ENCODE measurements at regions of chr11 and their contacts with region 1.

Region 1: GRCh38 chr11:68271781-68272608 is at the start of gene C11orf24:
- DNase-seq: peak; percentile 97
- ATAC-seq: peak; percentile 97
- H3K4me3 Mint-ChIP-seq: peak within 1 kb of the TSS; percentile 91
- H3K27ac Mint-ChIP-seq: peak within 1 kb of the TSS; percentile 95
- H3K4me1 Mint-ChIP-seq: peaks cover 30% of the 10 kb centered on the region
- H3K27me3 Mint-ChIP-seq: no peaks in the 10 kb centered on the region
- total RNA-seq, gene C11orf24: 29.4 to 37.4 TPM

Region 2: GRCh38 chr11:68030318-68031138 is 241.5 kb before region 1 on chr11 and contains the start of gene NDUFS8:
- CTCF ChIA-PET with region 1: no interaction called
- POLR2A ChIA-PET with region 1: no interaction called
- intact Hi-C with region 1: loop called in 1 of 2 experiments (anchors 1 kb)
- DNase-seq: peak; percentile 97
- ATAC-seq: peak; percentile 99
- H3K4me3 Mint-ChIP-seq: peak within 1 kb of the TSS; percentile 96
- H3K27ac Mint-ChIP-seq: peak within 1 kb of the TSS; percentile 95
- H3K4me1 Mint-ChIP-seq: peaks cover 26% of the 10 kb centered on the region
- H3K27me3 Mint-ChIP-seq: no peaks in the 10 kb centered on the region
- total RNA-seq, gene NDUFS8: 108 to 113 TPM

Region 3: DNA sequence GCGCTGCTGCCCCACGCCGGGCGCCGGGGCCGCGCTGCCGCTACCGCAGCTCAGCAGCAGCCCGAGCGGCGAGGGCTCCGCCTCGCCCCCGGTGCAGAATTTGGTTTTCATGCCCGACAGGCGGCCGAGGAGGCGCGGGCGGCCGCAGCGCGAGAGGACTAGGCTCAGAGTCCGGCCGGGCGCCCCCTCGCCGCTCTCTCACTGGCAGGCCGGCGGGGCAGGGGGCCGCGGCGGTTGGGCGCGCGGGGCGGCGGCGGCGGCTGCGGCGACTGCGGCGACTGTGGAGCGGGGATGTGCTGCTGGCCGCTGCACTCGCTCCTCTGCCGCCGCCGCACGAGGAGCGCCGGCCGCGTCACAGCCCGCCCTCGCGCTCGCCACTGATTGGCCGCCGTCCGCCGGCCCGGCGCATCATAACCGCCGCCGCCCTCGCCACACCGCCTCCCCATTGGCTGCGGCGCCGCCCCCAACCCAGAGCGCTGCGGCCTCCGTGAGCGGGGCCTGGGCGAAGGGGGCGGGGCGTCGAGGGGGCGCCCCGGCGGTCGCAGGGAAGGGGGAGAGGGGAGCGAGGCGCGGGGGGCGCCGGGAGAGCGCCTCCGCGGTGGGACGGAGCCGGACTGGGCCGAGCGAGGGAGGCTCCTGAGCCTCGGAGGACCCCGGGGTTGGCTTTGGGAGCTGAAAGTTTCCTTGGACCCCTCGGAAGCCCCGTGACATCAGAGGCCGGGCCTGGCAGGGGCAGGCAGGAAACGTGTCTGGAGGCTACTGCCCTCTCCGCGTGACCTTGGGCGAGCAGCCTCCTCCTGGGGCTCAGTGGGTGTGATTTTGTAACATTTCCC is 150.7 kb before region 1 on chr11 and contains the start of gene CHKA:
- CTCF ChIA-PET with region 1: no interaction called
- POLR2A ChIA-PET with region 1: no interaction called
- intact Hi-C with region 1: loop called in 1 of 2 experiments (anchors 1 kb)
- DNase-seq: peak; percentile 94
- ATAC-seq: peak; percentile 97
- H3K4me3 Mint-ChIP-seq: peak within 1 kb of the TSS; percentile 71
- H3K27ac Mint-ChIP-seq: peak within 1 kb of the TSS; percentile 68
- H3K4me1 Mint-ChIP-seq: peaks cover 7% of the 10 kb centered on the region
- H3K27me3 Mint-ChIP-seq: no peaks in the 10 kb centered on the region
- total RNA-seq, gene CHKA: 5.5 to 7.5 TPM

Region 4: DNA sequence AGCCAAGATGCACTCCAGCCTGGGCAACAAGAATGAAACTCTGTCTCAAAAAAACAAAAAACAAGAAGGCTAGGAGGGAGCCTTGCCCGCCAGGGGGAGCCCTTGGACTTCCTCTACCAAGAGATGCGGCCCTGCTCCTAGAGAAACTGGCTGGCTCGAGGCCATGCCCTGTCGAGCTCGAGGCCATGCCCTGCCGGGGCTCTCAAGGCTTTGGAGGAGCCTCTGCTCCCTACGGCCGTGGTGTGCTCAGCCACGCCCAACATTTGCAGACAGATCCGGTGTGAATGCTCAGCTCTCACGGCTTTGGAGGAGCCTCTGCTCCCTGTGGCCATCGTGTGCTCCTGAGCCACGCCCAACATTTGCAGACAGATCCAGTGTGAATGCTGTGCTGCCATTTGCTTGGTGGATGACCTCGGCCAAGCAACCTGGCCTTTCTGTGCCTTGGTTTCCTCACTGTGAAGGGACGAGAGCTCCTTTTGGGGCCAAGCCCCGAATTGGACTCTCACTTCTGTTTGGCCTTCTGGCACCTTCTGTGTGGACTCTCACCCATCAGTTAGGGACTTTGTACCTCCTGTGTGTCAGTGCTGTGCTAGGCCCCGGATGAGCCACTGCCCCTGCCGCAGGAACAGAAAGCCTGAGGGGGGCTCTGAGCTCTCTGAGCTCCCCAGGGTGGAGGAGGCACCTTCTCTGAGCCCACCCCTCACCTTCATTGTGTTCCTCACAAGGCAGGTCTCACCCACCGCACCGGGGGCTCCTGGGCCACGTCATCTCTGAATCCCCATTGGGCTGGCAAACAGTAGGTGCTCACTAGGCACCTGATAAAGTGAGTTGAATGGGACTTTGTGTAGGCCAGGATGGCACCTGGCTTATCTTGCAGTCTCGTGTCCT is 14.3 kb before region 1 on chr11:
- CTCF ChIA-PET with region 1: interaction called, 26 read pairs
- POLR2A ChIA-PET with region 1: no interaction called
- intact Hi-C with region 1: loop called in 1 of 2 experiments (anchors 1 kb)
- DNase-seq: peak; percentile 97
- ATAC-seq: peak; percentile 97
- H3K4me3 Mint-ChIP-seq: no peak overlapping the region
- H3K27ac Mint-ChIP-seq: no peak overlapping the region
- H3K4me1 Mint-ChIP-seq: peaks cover 3% of the 10 kb centered on the region
- H3K27me3 Mint-ChIP-seq: no peaks in the 10 kb centered on the region

Region 5: GRCh38 chr11:68297812-68298658 is 26.0 kb after region 1 on chr11:
- CTCF ChIA-PET with region 1: interaction called, 63 read pairs
- POLR2A ChIA-PET with region 1: interaction called, 5 read pairs
- intact Hi-C with region 1: loop called in 1 of 2 experiments (anchors 1 kb)
- DNase-seq: peak; percentile 83
- ATAC-seq: peak; percentile 98
- H3K4me3 Mint-ChIP-seq: no peak overlapping the region
- H3K27ac Mint-ChIP-seq: no peak overlapping the region
- H3K4me1 Mint-ChIP-seq: no peaks in the 10 kb centered on the region
- H3K27me3 Mint-ChIP-seq: no peaks in the 10 kb centered on the region

Region 6: GRCh38 chr11:68459886-68460740 is 188.1 kb after region 1 on chr11:
- CTCF ChIA-PET with region 1: no interaction called
- POLR2A ChIA-PET with region 1: no interaction called
- intact Hi-C with region 1: loop called in 1 of 2 experiments (anchors 1 kb)
- DNase-seq: peak; percentile 97
- ATAC-seq: peak; percentile 93
- H3K4me3 Mint-ChIP-seq: peak overlapping the region; percentile 86
- H3K27ac Mint-ChIP-seq: peak overlapping the region; percentile 89
- H3K4me1 Mint-ChIP-seq: peaks cover 31% of the 10 kb centered on the region
- H3K27me3 Mint-ChIP-seq: no peaks in the 10 kb centered on the region

Region 7: DNA sequence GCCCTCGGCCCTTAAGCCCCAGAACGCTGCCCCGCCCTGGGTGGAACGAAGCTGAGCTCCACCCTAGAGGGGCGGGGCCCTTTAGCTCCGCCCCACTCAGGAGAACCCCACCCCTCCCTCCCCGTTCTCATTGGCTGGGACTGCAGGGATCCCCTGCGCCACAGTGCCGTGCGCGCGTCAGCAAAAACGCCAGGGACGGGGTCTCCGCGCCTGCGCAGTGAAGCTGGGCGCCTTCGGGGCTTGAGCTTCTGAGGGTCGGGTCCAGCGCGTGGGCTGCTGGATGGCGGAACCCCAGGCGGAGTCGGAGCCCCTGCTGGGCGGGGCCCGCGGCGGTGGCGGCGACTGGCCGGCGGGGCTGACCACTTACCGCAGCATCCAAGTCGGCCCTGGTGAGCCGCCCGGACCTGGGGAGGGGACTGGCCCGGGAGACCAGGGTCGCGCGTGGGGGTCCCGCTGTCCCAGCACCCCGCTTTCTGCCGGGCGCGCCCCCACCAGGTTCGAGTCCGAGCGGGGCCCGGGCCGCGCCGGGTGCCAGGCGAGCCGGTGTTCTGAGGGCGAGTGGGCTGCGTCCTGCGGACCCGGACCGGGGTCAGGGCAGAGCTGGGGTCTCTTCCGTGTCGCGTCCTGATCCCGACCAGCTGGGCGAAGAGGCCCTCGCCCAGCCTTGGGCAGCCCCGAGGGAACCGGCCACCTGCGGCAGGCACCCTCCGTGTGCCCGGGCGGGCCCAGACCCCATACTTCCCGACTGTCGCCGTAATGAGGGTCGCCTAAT is 776.9 kb after region 1 on chr11 and contains the start of gene TPCN2:
- CTCF ChIA-PET with region 1: no interaction called
- POLR2A ChIA-PET with region 1: no interaction called
- intact Hi-C with region 1: loop called in 1 of 2 experiments (anchors 5 kb)
- DNase-seq: peak; percentile 94
- ATAC-seq: peak; percentile 99
- H3K4me3 Mint-ChIP-seq: peak within 1 kb of the TSS; percentile 72
- H3K27ac Mint-ChIP-seq: peak within 1 kb of the TSS; percentile 73
- H3K4me1 Mint-ChIP-seq: peaks cover 22% of the 10 kb centered on the region
- H3K27me3 Mint-ChIP-seq: peaks cover 2% of the 10 kb centered on the region
- total RNA-seq, gene TPCN2: 7.4 to 10.4 TPM